Left colon (tissue), 2 donors: ENCODE measurements at regions of chr3 and their contacts with region 1.

Region 1: GRCh38 chr3:112979240-112979832 is 4.4 kb upstream of the CD200R1 start:
- DNase-seq: no peak
- ATAC-seq: no peak

Region 2: DNA sequence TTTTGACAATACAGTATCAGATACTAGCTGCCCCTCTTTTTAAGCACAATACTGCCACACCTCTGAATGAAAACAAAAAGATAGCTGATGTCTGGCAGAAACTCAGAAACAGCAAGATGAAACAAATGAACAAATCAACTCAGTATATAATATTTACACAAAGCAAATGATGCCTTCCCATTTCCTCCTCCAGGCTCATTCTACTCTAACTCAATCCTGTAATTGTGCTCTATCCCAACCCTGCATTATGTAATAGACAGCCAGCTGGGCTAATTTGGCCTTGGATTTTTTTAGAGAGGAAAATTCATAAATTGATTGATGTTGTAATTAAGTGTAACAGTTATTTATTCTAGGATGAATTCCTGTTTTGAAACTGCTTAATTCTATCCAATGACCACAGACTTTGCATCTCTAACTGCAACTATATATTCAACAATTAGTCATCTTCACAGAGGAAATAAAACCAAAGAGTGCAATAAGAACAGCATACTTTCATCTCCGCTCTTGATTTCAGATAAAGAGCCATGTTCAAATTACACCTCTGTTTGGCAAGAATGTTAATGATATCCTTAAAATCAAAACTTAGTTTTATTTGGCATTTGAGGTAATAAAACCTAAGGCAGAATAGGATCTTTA is 423.7 kb before region 1 on chr3:
- intact Hi-C with region 1: no loop called
- DNase-seq: no peak
- ATAC-seq: peak; percentile 84

Region 3: GRCh38 chr3:112734718-112735350 is 244.5 kb before region 1 on chr3:
- intact Hi-C with region 1: loop called in 1 of 2 experiments (anchors 10 kb)
- DNase-seq: peak in 1 of 2 donors; percentile 71
- ATAC-seq: peak; percentile 66

Region 4: DNA sequence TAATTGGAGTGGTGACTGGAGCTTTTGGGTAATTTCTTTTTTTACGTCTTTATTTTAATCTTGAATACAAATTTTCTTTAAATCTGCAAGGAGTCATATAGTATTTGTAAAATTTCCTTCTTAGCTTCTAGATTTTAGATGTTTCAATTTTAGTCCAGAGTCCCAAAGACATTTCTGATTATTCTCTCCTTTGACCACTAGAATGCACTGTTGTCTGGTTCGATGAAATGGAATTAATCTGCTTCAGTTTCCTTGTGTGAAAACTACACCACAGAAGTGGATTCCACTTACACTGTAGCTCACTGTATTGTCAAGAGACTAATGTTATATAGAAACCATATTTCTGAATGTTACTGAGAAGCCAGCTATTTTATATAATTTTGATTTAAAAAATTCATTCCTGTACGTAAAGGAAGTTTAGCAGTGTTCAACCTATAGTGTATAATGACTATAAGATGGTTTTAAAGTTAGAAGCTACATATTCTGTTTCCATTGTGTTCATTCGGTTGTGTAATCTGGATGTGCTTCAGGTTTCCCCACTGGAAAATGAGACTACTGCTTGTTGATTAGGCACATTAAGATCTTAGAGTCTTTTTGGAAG is 865.4 kb after region 1 on chr3:
- intact Hi-C with region 1: no loop called
- DNase-seq: no peak
- ATAC-seq: peak; percentile 58